Posterior cingulate gyrus (tissue), 11 donors: ENCODE measurements at regions of chr7 and their contacts with region 1.

Region 1: GRCh38 chr7:124387056-124387455 is 354.2 kb upstream of the TMEM229A start:
- DNase-seq: no peak

Region 2: GRCh38 chr7:124649397-124650029 is 262.5 kb after region 1 on chr7:
- intact Hi-C with region 1: loop called (anchors 10 kb)
- DNase-seq: no peak